Right ventricle myocardium inferior (tissue), 1 donor: ENCODE measurements at regions of chr6 and their contacts with region 1.

Region 1: DNA sequence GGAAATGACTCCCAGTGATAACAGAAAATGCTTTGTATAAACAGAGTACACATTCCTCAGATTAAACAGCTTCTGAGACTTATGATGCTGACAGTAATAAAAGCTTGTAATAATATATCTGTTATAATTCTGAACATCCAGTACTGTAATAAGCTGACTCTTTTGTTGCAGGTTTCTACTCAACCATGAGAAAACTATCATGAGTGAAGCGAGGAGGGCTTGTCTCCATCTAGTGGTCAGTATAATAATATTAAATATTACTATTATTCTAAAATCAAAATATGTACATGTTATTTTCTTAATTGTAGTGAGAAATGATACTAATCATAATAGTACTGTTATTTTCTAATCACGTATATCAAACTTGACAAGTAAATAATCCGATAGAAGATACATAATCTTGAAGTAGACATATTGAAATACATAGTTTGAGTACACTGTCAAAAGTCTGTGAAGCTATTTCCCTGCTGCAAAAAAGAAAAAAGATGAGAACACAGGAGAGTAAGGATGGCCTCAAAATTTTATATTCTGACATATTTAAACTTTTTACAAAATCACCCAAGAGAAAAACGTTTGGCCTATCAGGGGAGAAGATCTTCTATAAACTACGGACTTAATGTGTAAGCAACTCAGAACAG is 183.1 kb downstream of the MOXD1 start:
- DNase-seq: no peak
- ATAC-seq: no peak

Region 2: GRCh38 chr6:131923356-131923755 is 294.8 kb before region 1 on chr6:
- intact Hi-C with region 1: loop called (anchors 5 kb)
- DNase-seq: no peak
- ATAC-seq: no peak

Region 3: GRCh38 chr6:131949909-131950766 is 268.0 kb before region 1 on chr6:
- intact Hi-C with region 1: loop called (anchors 10 kb)
- DNase-seq: peak; percentile 81
- ATAC-seq: peak; percentile 83

Region 4: GRCh38 chr6:132365281-132365907 is 147.2 kb after region 1 on chr6:
- intact Hi-C with region 1: no loop called
- DNase-seq: no peak
- ATAC-seq: no peak